CD4-positive, alpha-beta T cell (primary cell): ENCODE measurements at regions of chr9 and their contacts with region 1.

Region 1: GRCh38 chr9:68584189-68585033 is 43.7 kb upstream of the TMEM252 start:
- DNase-seq: peak; percentile 69 to 93 (median 80)
- ATAC-seq: peak; percentile 100
- H3K4me3 ChIP-seq: no peak overlapping the region
- H3K4me3 Mint-ChIP-seq: no peak overlapping the region
- H3K27ac ChIP-seq: no peak overlapping the region
- H3K27ac Mint-ChIP-seq: no peak overlapping the region
- H3K4me1 ChIP-seq: no peaks in the 10 kb centered on the region
- H3K4me1 Mint-ChIP-seq: no peaks in the 10 kb centered on the region
- H3K27me3 ChIP-seq: no peaks in the 10 kb centered on the region
- H3K27me3 Mint-ChIP-seq: peaks cover 22% of the 10 kb centered on the region
- CTCF ChIP-seq: peak; percentile 100

Region 2: GRCh38 chr9:68941780-68942459 is 357.5 kb after region 1 on chr9:
- CTCF ChIA-PET with region 1: no interaction called
- POLR2A ChIA-PET with region 1: no interaction called
- intact Hi-C with region 1: loop called in 1 of 2 experiments (anchors 5 kb)
- DNase-seq: no peak
- ATAC-seq: no peak
- H3K4me3 ChIP-seq: no peak overlapping the region
- H3K4me3 Mint-ChIP-seq: no peak overlapping the region
- H3K27ac ChIP-seq: no peak overlapping the region
- H3K27ac Mint-ChIP-seq: no peak overlapping the region
- H3K4me1 ChIP-seq: no peaks in the 10 kb centered on the region
- H3K4me1 Mint-ChIP-seq: no peaks in the 10 kb centered on the region
- H3K27me3 ChIP-seq: no peaks in the 10 kb centered on the region
- H3K27me3 Mint-ChIP-seq: peaks cover 13% of the 10 kb centered on the region
- CTCF ChIP-seq: no peak

Region 3: GRCh38 chr9:68949271-68950000 is 365.0 kb after region 1 on chr9:
- CTCF ChIA-PET with region 1: no interaction called
- POLR2A ChIA-PET with region 1: no interaction called
- intact Hi-C with region 1: loop called (anchors 2 to 5 kb)
- DNase-seq: peak in 7 of 14 experiments; percentile 1 to 41 (median 11)
- ATAC-seq: no peak
- H3K4me3 ChIP-seq: no peak overlapping the region
- H3K4me3 Mint-ChIP-seq: no peak overlapping the region
- H3K27ac ChIP-seq: no peak overlapping the region
- H3K27ac Mint-ChIP-seq: no peak overlapping the region
- H3K4me1 ChIP-seq: no peaks in the 10 kb centered on the region
- H3K4me1 Mint-ChIP-seq: no peaks in the 10 kb centered on the region
- H3K27me3 ChIP-seq: peaks cover 0 to 5% of the 10 kb centered on the region in 2 experiments
- H3K27me3 Mint-ChIP-seq: peaks cover 7% of the 10 kb centered on the region
- CTCF ChIP-seq: no peak

Region 4: DNA sequence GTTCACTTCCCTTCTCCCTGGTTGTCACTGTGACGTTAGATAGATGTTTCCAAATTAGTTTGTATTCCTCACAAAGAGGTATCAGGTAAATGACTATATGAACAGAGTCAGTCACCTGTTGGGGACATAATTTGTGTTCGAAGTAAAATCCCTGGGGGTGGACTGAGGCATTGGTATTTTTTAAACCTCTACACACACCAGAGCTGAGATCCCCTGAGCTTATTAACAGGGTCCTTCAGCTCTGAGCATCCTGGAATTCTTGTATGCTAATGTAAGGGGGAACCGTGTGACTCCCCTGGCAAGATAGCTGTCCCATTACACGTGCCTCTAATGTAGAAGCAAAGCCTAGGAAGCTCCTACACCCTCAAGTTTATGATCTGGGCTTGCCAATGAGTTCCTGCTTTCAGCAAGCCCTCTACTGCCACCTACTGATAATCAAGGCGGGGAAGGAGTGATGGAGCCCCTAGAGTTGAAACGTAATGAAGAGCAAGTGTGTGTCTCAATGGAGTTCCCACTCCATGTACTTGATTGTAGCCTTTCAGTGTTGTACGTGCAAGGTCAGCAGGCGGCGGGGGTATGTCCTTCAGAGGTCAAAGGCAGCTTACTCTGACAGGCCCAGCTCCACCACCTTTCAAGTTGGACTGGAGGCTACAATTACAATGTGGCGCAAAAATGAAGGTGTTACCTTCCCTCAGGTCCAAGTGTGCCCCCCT is 415.1 kb after region 1 on chr9:
- CTCF ChIA-PET with region 1: interaction called, 7 read pairs
- POLR2A ChIA-PET with region 1: no interaction called
- intact Hi-C with region 1: loop called (anchors 1 kb)
- DNase-seq: peak; percentile 44 to 83 (median 50)
- ATAC-seq: peak; percentile 95
- H3K4me3 ChIP-seq: no peak overlapping the region
- H3K4me3 Mint-ChIP-seq: no peak overlapping the region
- H3K27ac ChIP-seq: no peak overlapping the region
- H3K27ac Mint-ChIP-seq: no peak overlapping the region
- H3K4me1 ChIP-seq: peaks cover 9% of the 10 kb centered on the region
- H3K4me1 Mint-ChIP-seq: peaks cover 35% of the 10 kb centered on the region
- H3K27me3 ChIP-seq: no peaks in the 10 kb centered on the region
- H3K27me3 Mint-ChIP-seq: peaks cover 2% of the 10 kb centered on the region
- CTCF ChIP-seq: peak; percentile 79

Region 5: DNA sequence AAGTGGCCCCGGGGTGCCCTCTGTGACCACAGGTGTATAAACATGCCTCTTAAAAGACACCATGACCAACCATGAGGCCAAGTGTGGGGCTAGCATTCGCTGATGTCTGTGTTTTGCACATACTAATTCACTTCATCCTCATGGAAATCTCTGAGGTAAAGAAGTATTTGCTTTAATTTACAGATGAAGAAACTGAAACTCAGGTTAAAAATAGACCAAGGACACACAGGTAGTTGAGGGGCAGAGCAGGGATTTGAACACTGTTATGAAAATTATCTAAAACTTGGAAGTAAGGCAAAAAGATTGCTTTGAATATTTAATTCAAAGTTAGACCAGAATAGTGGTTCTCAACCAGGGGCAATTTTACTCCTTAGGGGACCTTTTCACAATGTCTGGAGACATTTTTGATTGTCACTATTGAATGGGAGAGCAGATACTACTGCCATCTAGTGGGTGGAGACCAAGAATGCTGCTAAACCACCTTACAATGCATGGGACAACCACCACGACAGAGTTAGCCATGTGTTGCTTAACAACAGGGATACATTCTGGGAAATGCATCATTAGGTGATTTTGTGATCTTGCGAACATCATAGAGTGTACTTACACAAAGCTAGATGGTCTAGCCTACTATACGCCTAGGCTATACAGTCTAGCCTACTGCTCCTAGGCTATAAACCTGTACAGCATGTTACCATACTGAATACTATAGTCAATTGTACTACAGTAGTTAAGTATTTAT is 443.1 kb after region 1 on chr9:
- CTCF ChIA-PET with region 1: no interaction called
- POLR2A ChIA-PET with region 1: no interaction called
- intact Hi-C with region 1: loop called (anchors 1 kb)
- DNase-seq: peak in 8 of 14 experiments; percentile 9 to 78 (median 44)
- ATAC-seq: peak; percentile 70
- H3K4me3 ChIP-seq: no peak overlapping the region
- H3K4me3 Mint-ChIP-seq: peak overlapping the region; percentile 68
- H3K27ac ChIP-seq: no peak overlapping the region
- H3K27ac Mint-ChIP-seq: peak overlapping the region; percentile 63
- H3K4me1 ChIP-seq: peaks cover 33% of the 10 kb centered on the region
- H3K4me1 Mint-ChIP-seq: peaks cover 55% of the 10 kb centered on the region
- H3K27me3 ChIP-seq: no peaks in the 10 kb centered on the region
- H3K27me3 Mint-ChIP-seq: no peaks in the 10 kb centered on the region
- CTCF ChIP-seq: peak; percentile 79

Region 6: DNA sequence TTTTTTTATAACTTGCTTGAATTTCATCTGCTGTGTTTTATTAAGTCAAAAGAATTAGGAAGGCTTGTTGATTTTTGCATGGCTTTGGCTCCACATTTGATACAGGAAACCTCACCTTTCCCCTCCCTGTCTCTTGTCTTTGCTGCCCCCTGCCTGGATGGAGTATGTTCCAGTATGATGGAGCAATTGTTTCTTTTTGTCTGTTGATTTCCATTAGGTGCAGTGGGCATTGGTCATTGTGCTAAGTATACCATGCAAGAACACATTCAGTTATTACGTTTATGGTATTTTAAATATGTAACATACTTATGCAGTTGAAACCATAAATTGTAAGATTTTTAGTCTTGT is 609.2 kb after region 1 on chr9:
- CTCF ChIA-PET with region 1: no interaction called
- POLR2A ChIA-PET with region 1: no interaction called
- intact Hi-C with region 1: loop called (anchors 1 to 2 kb)
- DNase-seq: no peak
- ATAC-seq: no peak
- H3K4me3 ChIP-seq: no peak overlapping the region
- H3K4me3 Mint-ChIP-seq: no peak overlapping the region
- H3K27ac ChIP-seq: no peak overlapping the region
- H3K27ac Mint-ChIP-seq: no peak overlapping the region
- H3K4me1 ChIP-seq: peaks cover 3% of the 10 kb centered on the region
- H3K4me1 Mint-ChIP-seq: peaks cover 27% of the 10 kb centered on the region
- H3K27me3 ChIP-seq: no peaks in the 10 kb centered on the region
- H3K27me3 Mint-ChIP-seq: no peaks in the 10 kb centered on the region
- CTCF ChIP-seq: no peak